Transverse colon (tissue), 4 donors: ENCODE measurements at regions of chr15 and their contacts with region 1.

Region 1: GRCh38 chr15:66386204-66387123 is at the start of gene MAP2K1:
- DNase-seq: peak; percentile 99
- H3K4me3 ChIP-seq: peak within 1 kb of the TSS; percentile 81 to 98 (median 90)
- H3K27ac ChIP-seq: peak within 1 kb of the TSS; percentile 97 to 99 (median 98)
- H3K4me1 ChIP-seq: peaks cover 10 to 43% (median 15%) of the 10 kb centered on the region in 4 donors
- H3K27me3 ChIP-seq: no peaks in the 10 kb centered on the region
- CTCF ChIP-seq: peak; percentile 46 to 76 (median 56)
- EP300 ChIP-seq: no peak
- POLR2A ChIP-seq: peak; percentile 81
- total RNA-seq, gene MAP2K1: 14.7 to 83.0 (median 40.0) TPM

Region 2: DNA sequence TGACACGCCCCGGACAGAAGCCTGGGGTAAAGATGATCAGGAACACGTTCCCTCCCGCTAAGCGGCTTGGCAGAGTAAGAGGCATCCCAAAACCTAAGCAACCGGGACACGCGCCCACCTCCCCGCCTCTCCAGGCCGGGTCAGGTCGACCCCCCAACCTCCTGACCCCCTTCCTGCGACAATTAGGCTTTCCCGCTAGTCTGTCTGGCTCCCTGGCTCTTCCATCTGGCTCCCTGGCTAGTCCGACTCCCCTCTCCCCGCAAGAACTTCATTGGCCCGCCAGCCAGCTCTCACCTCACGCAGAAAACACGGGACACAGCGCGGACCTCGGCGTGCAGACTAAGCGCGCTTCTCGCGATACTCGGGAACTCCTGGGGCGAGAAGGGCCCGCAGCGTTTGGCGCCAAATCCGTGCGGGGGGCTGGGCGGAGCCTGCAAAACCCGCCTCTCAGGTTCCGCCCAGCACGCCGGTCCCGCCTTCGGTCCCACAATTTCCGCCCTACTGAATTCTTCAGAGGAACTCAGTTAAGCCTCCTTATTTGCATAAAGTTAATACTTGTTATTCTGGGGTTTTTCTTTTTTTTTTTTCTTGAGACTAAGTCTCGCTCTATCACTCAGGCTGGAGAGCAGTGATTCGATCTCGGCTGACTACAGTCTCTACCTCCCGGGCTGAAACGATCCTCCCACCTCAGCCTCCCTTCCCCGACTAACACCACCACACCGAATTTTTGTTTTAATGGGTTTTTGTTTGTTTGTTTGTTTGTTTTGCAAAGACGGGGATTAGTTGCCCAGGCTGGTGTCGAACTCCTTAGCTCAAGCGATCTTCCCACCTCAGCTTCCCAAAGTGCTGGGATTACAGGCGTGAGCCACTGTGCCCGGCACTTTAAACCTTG is 29.9 kb before region 1 on chr15 and contains the start of gene TIPIN:
- in situ Hi-C with region 1: no loop called
- intact Hi-C with region 1: loop called (anchors 2 kb)
- DNase-seq: peak; percentile 98
- H3K4me3 ChIP-seq: peak within 1 kb of the TSS; percentile 43 to 73 (median 56)
- H3K27ac ChIP-seq: peak within 1 kb of the TSS; percentile 64 to 88 (median 78)
- H3K4me1 ChIP-seq: peaks cover 0 to 19% (median 8%) of the 10 kb centered on the region in 4 donors
- H3K27me3 ChIP-seq: no peaks in the 10 kb centered on the region
- CTCF ChIP-seq: no peak
- EP300 ChIP-seq: no peak
- POLR2A ChIP-seq: peak; percentile 53
- total RNA-seq, gene TIPIN: 2.2 to 4.0 (median 2.5) TPM in 3 of 4 donors, not detected in the other

Region 3: DNA sequence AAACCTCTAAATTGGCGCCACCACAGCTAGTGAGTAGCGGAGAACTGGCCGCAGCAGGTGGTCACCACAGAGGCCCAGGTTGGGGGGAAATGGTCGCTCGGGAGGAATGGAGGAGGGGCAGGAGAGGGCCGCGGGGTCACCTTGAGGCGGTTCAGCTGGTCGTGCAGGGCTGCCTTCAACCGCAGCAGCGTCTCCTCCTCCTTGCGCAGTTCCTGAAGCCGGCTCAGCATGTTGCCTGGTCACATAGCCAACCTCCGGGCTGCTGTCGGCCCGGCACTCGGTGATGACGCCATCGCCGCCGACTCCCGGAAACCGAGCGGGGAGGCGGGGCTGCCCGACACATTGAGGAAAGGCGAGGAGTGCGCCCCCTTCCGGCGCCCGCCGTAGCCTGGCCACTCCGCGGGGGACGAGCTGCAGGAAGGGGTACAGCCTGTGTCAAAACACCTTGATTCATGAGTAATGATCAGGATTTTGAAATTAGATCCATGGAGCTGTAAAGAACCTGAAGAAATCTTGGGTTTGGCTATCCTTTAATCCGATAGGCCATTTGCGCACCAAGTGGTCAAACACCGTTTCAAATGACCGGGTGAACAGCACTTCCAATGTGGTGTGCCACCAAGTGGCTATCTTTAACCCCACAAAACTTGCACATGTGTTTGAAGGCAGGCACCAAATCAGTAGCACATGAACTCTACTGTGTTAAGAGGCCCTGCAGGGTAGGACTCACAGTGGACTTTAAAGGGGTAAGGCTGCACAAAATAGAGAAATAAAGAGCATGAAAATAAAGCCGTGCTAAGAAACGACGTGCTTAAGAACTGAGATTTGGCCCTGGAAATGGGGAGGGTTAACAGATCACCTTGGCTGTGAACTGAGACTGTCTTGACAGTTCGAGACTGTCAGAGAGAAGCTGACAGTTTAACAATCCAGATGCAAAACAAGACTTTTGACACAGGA is 111.3 kb after region 1 on chr15 and contains the start of gene SNAPC5:
- in situ Hi-C with region 1: loop called in 2 of 4 experiments (anchors 5 to 25 kb)
- intact Hi-C with region 1: loop called (anchors 2 kb)
- DNase-seq: peak; percentile 98
- H3K4me3 ChIP-seq: peak within 1 kb of the TSS; percentile 60 to 85 (median 83)
- H3K27ac ChIP-seq: peak within 1 kb of the TSS; percentile 83 to 94 (median 91)
- H3K4me1 ChIP-seq: peaks cover 10 to 30% (median 17%) of the 10 kb centered on the region in 4 donors
- H3K27me3 ChIP-seq: no peaks in the 10 kb centered on the region
- CTCF ChIP-seq: peak; percentile 97 to 99 (median 98)
- EP300 ChIP-seq: no peak
- POLR2A ChIP-seq: peak; percentile 81
- total RNA-seq, gene SNAPC5: 2.6 to 64.0 (median 32.1) TPM

Region 4: DNA sequence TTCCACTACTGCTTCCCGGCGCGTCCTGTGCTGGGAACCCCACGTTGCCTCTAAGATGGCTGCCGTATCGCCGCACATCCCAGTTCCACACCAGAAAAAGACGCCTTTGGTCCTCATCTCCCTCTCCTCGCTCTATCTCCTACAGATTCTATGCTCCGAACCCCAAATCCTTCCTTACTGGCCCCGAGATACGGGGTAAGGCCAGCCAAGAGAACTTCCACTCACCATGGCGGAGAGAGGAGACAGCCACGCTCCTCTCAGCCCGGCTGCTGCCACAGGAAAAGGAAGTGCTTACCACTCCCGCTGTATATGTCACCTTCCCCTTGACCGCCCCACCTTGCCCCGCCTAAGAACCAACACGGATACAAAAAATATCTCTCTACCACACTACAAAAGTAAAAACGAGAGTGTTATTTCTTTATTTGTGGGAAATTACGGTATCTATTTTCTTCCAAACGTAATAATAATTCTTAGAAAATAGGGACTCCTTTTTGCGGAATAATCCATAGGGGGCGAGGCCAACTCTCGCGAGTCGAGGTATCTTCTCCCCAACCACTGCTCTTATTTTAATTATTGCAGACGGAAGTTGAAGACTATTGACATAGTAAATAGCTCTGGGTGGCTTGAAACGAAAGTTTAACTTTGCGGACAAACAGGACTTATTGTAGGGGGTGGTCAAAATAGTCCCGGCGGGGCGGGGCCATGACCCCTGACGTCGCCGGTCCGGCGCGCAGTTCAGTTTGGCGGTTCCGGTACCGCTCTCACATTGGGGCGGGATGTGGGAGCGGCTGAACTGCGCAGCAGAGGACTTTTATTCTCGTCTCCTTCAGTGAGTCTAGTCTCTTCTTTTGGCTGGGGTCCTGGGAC is 118.3 kb after region 1 on chr15 and contains the starts of genes RPL4 and ZWILCH:
- in situ Hi-C with region 1: loop called in 2 of 4 experiments (anchors 5 to 25 kb)
- intact Hi-C with region 1: loop called (anchors 2 kb)
- DNase-seq: peak; percentile 82
- H3K4me3 ChIP-seq: peak within 1 kb of the TSS; percentile 58 to 96 (median 88)
- H3K27ac ChIP-seq: peak within 1 kb of the TSS; percentile 88 to 98 (median 92)
- H3K4me1 ChIP-seq: peaks cover 11 to 32% (median 22%) of the 10 kb centered on the region in 4 donors
- H3K27me3 ChIP-seq: no peaks in the 10 kb centered on the region
- CTCF ChIP-seq: peak in 4 of 5 experiments; percentile 11 to 44 (median 32)
- EP300 ChIP-seq: no peak
- POLR2A ChIP-seq: peak; percentile 98
- total RNA-seq, gene RPL4: 1,084 to 1,586 (median 1,392) TPM
- total RNA-seq, gene ZWILCH: 1.9 to 6.8 (median 4.4) TPM